Endothelial cell of umbilical vein (primary cell): ENCODE measurements at regions of chr5 and their contacts with region 1.

Region 1: DNA sequence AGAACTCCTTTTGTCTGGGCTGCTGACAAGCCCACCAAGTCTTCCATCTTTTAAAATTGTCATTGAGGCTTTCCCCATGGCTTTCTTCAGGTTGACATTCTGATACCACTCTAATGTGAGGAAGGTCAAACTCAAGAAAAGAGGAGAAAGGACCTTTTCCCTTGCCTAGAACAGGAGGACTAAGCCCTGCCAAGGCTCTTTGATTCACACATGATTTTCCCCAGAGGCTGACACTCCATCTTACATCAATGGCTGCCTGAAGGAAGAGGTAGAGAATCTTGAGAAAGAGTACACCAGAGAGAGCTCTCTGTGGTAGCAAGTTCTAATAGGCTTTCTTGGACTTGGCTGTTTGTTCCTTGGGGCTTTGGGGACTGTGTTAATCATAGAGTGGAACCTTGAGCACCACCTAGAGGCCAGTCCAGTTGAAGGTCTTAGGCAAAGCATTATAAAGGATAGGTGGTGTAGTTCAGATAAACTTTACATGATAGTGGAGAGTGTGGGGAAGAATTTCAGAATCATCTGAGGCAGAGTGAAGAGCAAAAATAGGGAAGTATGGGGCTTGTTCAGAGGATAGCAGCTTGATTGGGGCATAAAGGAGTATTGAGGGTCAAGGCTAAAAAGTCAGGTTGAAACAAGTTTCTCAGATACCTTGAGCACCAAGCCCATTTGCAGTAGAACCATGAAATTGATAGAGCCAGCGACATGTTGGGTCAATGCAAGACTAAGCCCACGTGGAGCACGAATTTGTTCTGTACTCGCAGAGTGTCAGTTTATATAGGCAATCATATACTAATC is 36.7 kb downstream of the NDFIP1 start:
- DNase-seq: peak; percentile 71
- H3K4me3 ChIP-seq: no peak overlapping the region
- H3K27ac ChIP-seq: no peak overlapping the region
- H3K4me1 ChIP-seq: no peaks in the 10 kb centered on the region
- H3K27me3 ChIP-seq: no peaks in the 10 kb centered on the region
- CTCF ChIP-seq: peak; percentile 71 to 74
- POLR2A ChIP-seq: no peak

Region 2: DNA sequence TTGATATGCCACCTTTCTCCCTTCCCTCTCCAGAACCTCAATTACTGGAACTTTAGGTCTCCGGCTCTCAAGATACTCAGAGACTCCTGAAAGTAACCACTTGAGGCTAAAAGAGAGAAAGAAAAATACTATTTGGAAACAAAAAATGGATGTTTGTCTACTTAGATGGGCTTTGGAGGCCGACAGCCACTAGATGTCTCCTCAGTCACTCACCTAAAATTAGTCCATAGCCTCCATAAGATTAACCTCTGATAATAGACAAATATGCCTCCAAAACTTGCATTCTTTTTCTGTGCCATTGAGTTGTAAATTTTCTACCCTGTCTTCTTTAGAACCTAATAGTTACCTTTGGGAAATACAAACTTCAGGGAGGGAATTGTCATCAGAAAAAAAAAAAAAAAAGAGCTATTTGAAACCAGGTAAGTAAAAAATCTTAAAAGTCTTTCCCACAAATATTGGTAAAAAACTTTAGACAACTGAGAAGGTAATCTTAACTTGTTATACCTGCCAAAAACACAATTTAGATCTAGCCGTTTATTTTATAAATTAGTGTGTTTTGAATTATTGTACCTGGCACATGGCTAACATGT is 255.9 kb before region 1 on chr5:
- CTCF ChIA-PET with region 1: interaction called, 7 read pairs
- POLR2A ChIA-PET with region 1: no interaction called
- dilution Hi-C with region 1: no loop called
- intact Hi-C with region 1: loop called (anchors 1 kb)
- DNase-seq: peak; percentile 48
- H3K4me3 ChIP-seq: no peak overlapping the region
- H3K27ac ChIP-seq: no peak overlapping the region
- H3K4me1 ChIP-seq: no peaks in the 10 kb centered on the region
- H3K27me3 ChIP-seq: peaks cover 0 to 12% of the 10 kb centered on the region in 2 experiments
- CTCF ChIP-seq: peak; percentile 10 to 43
- POLR2A ChIP-seq: no peak

Region 3: DNA sequence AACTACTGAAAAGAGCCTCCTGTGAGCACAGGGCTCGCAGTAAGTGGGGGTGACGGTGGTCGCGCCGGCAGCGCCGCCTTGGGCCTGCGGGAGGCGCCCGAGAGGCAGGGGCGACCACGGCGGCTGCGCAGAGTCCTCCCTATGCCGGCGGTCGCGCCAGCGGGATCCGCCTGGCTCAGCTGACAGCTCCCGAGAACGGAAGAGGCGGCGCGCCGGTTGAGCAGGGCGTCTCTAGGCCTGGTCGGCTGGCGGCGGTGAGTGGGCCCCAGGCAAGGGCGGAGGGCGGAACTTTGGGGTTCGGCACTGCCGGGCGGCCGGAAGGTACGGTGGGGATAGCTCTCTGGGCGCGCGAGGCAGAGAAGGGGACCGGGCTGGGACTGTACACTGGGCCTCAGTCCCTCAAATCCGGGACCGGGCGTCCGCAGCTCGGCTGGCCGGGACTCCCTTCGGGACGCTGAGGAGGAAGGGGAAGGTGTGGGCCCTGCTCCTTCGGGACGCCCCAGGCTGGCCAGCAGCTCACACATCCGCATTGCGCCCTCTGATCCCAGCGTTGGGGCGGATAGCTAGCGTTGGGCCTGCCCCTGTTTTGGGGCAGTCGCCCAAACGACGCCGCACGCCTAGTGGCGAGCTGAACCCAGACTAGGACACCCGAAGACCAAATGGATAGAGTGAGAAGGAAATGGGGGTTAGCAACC is 176.2 kb before region 1 on chr5 and contains the start of gene RNF14:
- CTCF ChIA-PET with region 1: interaction called, 15 read pairs
- POLR2A ChIA-PET with region 1: no interaction called
- dilution Hi-C with region 1: no loop called
- intact Hi-C with region 1: no loop called
- DNase-seq: peak; percentile 95
- H3K4me3 ChIP-seq: peak within 1 kb of the TSS; percentile 89 to 97 (median 97)
- H3K27ac ChIP-seq: peak within 1 kb of the TSS; percentile 77
- H3K4me1 ChIP-seq: peaks cover 24% of the 10 kb centered on the region
- H3K27me3 ChIP-seq: no peaks in the 10 kb centered on the region
- CTCF ChIP-seq: peak; percentile 93 to 98
- POLR2A ChIP-seq: peak; percentile 90
- total RNA-seq, gene RNF14: 53.1 and 55.9 TPM in 2 replicates

Region 4: GRCh38 chr5:141992349-141992963 is 152.8 kb before region 1 on chr5:
- CTCF ChIA-PET with region 1: interaction called, 93 read pairs
- POLR2A ChIA-PET with region 1: interaction called, 7 read pairs
- dilution Hi-C with region 1: loop called (anchors 25 kb)
- intact Hi-C with region 1: loop called (anchors 1 kb)
- DNase-seq: peak; percentile 72
- H3K4me3 ChIP-seq: no peak overlapping the region
- H3K27ac ChIP-seq: no peak overlapping the region
- H3K4me1 ChIP-seq: no peaks in the 10 kb centered on the region
- H3K27me3 ChIP-seq: no peaks in the 10 kb centered on the region
- CTCF ChIP-seq: peak; percentile 45 to 58
- POLR2A ChIP-seq: no peak

Region 5: DNA sequence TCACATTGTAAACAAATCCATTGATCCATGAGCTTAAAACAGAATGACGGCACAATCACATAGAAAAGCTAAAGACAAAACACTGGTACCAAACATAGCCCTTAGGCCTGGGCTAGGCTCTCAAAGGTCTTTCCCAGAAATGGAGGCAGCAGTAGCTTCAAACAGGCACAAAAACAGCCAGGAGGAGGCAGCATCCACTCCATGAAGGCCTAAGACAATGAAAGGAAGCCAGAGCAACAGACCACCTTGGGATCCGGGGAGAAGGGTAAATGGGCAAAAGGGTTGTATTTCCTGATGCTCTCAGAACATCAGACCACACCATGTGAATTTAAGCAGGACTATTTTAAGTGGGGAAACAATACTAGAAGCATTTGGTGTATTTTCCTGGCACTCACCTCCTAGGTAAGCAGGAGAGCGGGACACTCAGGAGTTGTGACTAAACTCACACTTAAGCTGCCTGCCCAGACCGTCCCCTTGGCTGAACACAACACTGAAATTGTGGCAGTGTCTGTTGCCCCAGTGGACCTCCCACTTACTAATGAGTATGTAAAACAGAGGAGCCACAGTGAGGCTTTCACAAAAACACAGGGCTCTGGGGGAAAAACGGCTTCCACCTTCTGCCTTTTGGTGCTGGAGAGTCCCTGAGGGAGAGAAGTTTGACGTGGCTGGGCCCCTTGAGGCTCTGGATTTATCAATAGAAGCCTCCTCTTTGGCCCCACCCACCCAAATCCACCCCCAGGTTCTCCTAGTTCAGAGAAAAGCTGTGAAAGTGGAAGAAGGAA is 144.4 kb before region 1 on chr5:
- CTCF ChIA-PET with region 1: interaction called, 46 read pairs
- POLR2A ChIA-PET with region 1: no interaction called
- dilution Hi-C with region 1: loop called (anchors 25 kb)
- intact Hi-C with region 1: loop called (anchors 1 kb)
- DNase-seq: peak; percentile 42
- H3K4me3 ChIP-seq: no peak overlapping the region
- H3K27ac ChIP-seq: no peak overlapping the region
- H3K4me1 ChIP-seq: peaks cover 3% of the 10 kb centered on the region
- H3K27me3 ChIP-seq: no peaks in the 10 kb centered on the region
- CTCF ChIP-seq: peak; percentile 47 to 55
- POLR2A ChIP-seq: no peak

Region 6: DNA sequence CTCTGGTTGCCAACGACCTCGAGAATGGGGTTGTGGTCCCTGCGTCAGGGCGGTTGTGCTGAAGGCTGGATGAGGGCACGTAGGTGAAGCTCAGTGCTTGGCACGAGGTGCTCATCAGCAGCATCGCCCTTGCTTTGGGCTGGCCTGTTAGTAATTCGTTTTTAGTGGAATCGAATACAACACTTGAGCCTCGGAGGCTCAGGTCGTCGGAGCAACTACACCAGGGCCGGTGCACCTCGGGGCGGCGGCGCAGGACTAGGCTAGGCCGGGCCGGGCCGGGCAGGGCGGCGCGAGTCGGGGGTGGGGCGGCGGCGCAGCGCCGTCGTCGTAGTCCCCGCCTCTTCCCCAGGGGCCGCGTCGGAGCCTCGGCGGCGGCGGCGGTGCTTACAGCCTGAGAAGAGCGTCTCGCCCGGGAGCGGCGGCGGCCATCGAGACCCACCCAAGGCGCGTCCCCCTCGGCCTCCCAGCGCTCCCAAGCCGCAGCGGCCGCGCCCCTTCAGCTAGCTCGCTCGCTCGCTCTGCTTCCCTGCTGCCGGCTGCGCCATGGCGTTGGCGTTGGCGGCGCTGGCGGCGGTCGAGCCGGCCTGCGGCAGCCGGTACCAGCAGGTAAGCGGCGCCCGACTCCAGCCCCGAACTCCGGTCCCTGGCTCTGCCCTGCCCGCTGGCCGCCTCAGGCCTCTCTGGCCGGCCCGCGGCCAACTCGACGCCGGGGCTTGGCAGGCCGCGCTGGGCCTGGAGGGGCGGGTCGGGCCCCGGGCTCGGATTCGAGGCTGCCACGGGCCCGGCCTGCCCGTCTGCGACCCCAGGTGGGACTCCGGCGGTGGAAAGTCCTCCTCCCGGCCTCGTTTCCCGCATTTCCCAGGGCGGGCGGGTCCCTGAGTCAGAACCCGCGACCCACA is 36.6 kb before region 1 on chr5 and contains the start of gene NDFIP1:
- CTCF ChIA-PET with region 1: interaction called, 13 read pairs
- POLR2A ChIA-PET with region 1: no interaction called
- dilution Hi-C with region 1: no loop called
- intact Hi-C with region 1: loop called (anchors 2 kb)
- DNase-seq: peak; percentile 85
- H3K4me3 ChIP-seq: peak within 1 kb of the TSS; percentile 64 to 84 (median 80)
- H3K27ac ChIP-seq: peak within 1 kb of the TSS; percentile 75
- H3K4me1 ChIP-seq: peaks cover 14% of the 10 kb centered on the region
- H3K27me3 ChIP-seq: no peaks in the 10 kb centered on the region
- CTCF ChIP-seq: no peak
- POLR2A ChIP-seq: peak; percentile 88
- total RNA-seq, gene NDFIP1: 40.3 and 42.6 TPM in 2 replicates

Region 7: GRCh38 chr5:142197098-142197497 is 51.8 kb after region 1 on chr5:
- CTCF ChIA-PET with region 1: no interaction called
- POLR2A ChIA-PET with region 1: no interaction called
- dilution Hi-C with region 1: no loop called
- intact Hi-C with region 1: no loop called
- DNase-seq: peak; percentile 64
- H3K4me3 ChIP-seq: no peak overlapping the region
- H3K27ac ChIP-seq: peak overlapping the region; percentile 93
- H3K4me1 ChIP-seq: peaks cover 41% of the 10 kb centered on the region
- H3K27me3 ChIP-seq: no peaks in the 10 kb centered on the region
- CTCF ChIP-seq: no peak
- POLR2A ChIP-seq: no peak

Region 8: GRCh38 chr5:142296914-142297417 is 151.7 kb after region 1 on chr5:
- CTCF ChIA-PET with region 1: no interaction called
- POLR2A ChIA-PET with region 1: no interaction called
- dilution Hi-C with region 1: no loop called
- intact Hi-C with region 1: no loop called
- DNase-seq: peak; percentile 98
- H3K4me3 ChIP-seq: no peak overlapping the region
- H3K27ac ChIP-seq: peak overlapping the region; percentile 99
- H3K4me1 ChIP-seq: peaks cover 41% of the 10 kb centered on the region
- H3K27me3 ChIP-seq: no peaks in the 10 kb centered on the region
- CTCF ChIP-seq: no peak
- POLR2A ChIP-seq: no peak